ENCODE measurements at regions of chr5 and their contacts with region 1.

Region 1: GRCh38 chr5:81779125-81779915 is 28.4 kb upstream of the SSBP2 start:
- DNase-seq: peak; percentile 34
- CTCF ChIP-seq: no peak

Region 2: GRCh38 chr5:81767938-81768337 is 11.4 kb before region 1 on chr5:
- CTCF ChIA-PET with region 1: interaction called, 10 read pairs
- POLR2A ChIA-PET with region 1: no interaction called
- DNase-seq: no peak
- CTCF ChIP-seq: no peak

Region 3: DNA sequence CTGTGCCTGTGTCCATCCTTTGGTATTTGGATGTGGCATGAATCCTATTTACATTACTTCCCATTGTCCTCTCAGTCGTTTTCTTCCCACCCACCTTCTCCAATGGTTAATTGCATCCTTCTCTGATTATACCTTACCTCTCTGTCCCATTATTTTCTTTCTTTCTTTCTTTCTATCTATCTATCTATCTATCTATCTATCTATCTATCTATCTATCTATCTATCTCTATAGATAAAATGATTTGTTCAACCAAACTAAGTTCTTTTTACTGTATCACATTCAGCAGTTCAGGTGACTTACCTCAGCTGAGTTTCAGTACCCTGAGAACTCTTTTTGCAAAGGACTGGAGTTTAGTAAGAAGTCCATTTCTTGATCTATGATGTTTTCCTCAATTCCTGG is 418.2 kb after region 1 on chr5:
- CTCF ChIA-PET with region 1: no interaction called
- POLR2A ChIA-PET with region 1: no interaction called
- DNase-seq: no peak
- CTCF ChIP-seq: no peak